Astrocyte of the cerebellum (primary cell): ENCODE measurements at regions of chr19 and their contacts with region 1.

Region 1: DNA sequence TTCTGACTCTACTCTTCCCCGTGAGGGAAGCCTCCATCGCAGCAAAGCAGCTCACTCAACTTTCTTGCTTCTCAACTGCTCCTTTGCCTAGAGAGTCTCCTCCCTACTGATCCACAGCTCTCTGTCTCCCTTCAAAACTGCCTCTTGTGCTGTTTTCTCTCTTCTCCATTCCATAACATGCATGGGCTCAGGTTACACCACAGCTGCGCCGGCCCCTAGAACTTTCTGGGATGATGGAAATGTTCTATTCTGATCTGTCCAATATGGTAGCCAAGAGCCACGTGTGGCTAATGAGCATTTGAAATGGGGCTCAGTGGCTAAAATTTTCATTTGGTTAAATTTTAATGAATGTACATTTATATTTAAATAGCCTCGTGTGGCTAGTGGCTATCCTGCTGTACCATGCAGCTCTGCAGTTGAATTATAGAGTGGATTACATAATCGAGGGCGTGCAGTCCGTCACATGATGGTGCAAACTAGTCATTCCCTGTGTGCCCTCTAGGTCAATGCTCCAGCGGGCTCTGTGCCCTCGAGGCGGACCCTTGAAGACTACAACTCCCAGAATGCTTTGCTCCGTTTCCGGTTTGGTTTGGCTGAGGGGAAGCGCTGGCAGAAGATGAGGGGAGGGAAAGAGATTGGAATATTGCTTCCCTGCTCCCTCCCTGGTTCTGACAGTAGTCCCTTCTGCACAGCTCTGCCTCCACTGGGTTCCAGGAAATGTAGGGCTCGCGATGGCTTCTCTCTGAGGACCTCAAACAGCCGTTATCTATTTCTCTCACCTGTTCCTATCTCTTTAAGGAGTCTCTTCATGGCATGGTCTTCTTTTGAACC is 109.8 kb downstream of the CACNA1A start:
- DNase-seq: no peak
- H3K4me3 ChIP-seq: no peak overlapping the region
- CTCF ChIP-seq: no peak

Region 2: GRCh38 chr19:13334801-13335481 is 61.5 kb before region 1 on chr19:
- in situ Hi-C with region 1: loop called (anchors 5 kb)
- DNase-seq: no peak
- H3K4me3 ChIP-seq: no peak overlapping the region
- CTCF ChIP-seq: no peak

Region 3: GRCh38 chr19:13451434-13451995 is 55.0 kb after region 1 on chr19:
- in situ Hi-C with region 1: no loop called
- DNase-seq: no peak
- H3K4me3 ChIP-seq: no peak overlapping the region
- CTCF ChIP-seq: no peak

Region 4: DNA sequence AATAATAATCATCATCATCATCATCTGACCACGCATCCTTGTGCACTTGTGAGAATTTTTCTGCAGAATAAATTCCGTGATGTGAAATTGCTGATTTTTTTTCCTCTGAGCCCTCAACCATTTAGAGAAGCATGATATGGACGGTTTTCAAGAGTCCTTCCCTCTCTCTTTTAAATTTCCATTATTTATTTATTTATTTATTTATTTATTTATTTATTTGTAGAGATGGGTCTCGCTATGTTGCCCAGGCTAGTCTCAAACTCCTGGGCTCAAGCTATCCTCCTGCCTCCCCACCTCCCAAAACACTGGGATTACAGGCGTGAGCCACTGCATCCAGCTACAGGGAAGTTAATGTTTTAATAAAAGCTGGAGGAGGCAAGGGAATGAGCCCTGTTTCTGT is 70.2 kb after region 1 on chr19:
- in situ Hi-C with region 1: no loop called
- DNase-seq: no peak
- H3K4me3 ChIP-seq: no peak overlapping the region
- CTCF ChIP-seq: no peak